GM12878 (cell line): ENCODE measurements at regions of chr11 and their contacts with region 1.

Region 1: DNA sequence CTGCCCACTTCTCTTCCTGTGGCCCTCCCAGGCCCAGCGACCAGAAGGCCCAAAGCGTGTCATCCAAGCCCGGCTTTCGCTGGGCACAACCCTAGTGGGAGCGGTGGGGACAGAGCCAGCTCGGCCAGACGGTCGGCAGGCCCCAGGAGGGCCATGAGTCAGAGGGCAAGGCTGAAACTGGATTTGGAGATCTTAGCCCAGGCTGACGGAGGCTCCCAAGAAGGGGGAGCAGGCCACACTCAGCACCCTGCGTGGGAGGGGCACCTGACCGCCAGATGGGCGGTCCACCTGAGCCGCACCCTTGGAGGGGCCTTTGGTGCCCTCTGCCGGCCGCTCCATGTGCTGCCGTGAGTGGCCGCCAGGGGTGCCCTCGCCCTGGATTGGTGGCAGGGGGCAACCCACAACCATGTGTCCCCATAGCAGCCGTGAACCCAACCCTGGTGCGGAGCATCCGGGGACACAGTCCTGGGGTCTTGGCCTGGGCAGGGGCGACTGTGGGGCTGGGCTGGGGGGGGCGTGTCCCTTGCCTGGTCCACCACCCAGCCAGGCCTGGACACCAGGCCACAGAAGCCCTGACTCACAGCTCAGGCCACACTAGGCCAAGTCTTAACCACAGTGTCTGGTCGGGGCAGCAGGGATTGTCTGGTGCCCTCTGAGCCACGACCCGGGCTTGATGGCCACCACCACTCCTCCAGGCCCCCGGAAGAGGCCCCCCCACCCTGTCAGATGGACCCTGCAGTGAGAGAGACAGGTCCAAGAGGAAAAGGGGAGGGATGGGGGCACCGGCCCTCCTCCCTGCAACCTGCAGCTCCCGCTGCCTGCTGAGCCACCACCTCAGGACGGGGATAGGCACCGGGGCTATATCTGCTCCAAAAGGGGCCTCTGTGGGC is 19.2 kb upstream of the TALDO1 start:
- DNase-seq: no peak
- ATAC-seq: peak; percentile 89
- H3K4me3 ChIP-seq: no peak overlapping the region
- H3K27ac ChIP-seq: no peak overlapping the region
- H3K4me1 ChIP-seq: peaks cover 6% of the 10 kb centered on the region
- H3K27me3 ChIP-seq: no peaks in the 10 kb centered on the region
- CTCF ChIP-seq: peak; percentile 93 to 100 (median 100); a peak in 5 of 6 replicates
- EP300 ChIP-seq: no peak
- POLR2A ChIP-seq: 0 out of 2 replicates have a peak, but pooled peaks have one; percentile 7
- RAD21 ChIP-seq: peak; percentile 70

Region 2: GRCh38 chr11:554824-555472 is 173.2 kb before region 1 on chr11:
- CTCF ChIA-PET with region 1: interaction called, 54 read pairs
- POLR2A ChIA-PET with region 1: interaction called, 6 read pairs
- RAD21 ChIA-PET with region 1: interaction called, 22 read pairs
- SMC1A ChIA-PET with region 1: interaction called, 6 read pairs
- in situ Hi-C with region 1: no loop called
- intact Hi-C with region 1: loop called (anchors 2 kb)
- DNase-seq: no peak
- ATAC-seq: peak; percentile 90
- H3K4me3 ChIP-seq: peak overlapping the region; percentile 53; the same call in 1 of the 2 replicates
- H3K27ac ChIP-seq: no peak overlapping the region
- H3K4me1 ChIP-seq: peaks cover 2% of the 10 kb centered on the region
- H3K27me3 ChIP-seq: peaks cover 0 to 5% of the 10 kb centered on the region in 2 experiments; a peak in 2 of 4 replicates
- CTCF ChIP-seq: peak; percentile 48 to 79 (median 74)
- EP300 ChIP-seq: no peak
- POLR2A ChIP-seq: peak; percentile 26; the same call in 1 of the 2 replicates
- RAD21 ChIP-seq: peak; percentile 77

Region 3: DNA sequence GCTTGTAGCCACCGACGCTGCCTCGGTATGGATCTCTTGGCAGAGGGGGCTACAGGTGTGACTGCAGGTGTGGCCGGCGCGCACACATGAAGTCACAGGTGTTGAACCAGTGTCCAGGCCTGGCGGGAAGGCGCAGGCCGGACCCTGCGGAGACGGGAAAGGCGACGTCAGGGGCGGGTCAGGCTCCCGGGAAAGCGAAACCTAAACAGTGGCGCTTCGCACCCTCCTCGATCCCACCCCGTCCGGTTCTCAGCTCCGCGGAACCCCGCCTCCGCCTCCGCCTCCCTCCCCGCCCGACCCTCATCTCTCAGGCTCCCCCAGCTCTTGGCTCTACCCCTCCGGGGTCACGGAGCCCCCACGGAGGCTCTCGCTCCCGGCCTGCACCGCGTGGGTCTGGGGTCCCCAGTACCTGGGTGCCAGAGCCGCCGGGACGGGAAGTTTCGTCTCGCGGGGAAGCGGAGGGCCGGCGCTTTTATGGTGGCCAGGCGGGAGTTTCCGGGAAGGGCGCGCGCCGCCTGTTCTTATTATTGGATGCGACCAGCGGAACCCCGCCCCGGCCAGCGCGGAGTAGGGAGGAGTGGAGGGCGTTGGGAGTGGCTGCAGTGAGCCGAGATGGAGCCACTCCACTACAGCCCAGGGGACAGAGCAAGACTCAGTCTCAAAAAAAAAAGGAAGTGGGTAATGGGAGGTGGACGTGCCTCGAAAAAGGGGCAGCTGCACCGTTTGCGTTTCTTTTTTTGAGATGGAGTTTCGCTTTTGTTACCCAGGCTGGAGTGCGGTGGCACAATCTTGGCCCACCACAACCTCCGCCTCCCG is 112.4 kb before region 1 on chr11 and contains the start of gene IRF7:
- CTCF ChIA-PET with region 1: no interaction called
- POLR2A ChIA-PET with region 1: interaction called, 4 read pairs
- RAD21 ChIA-PET with region 1: interaction called, 5 read pairs
- SMC1A ChIA-PET with region 1: no interaction called
- in situ Hi-C with region 1: no loop called
- intact Hi-C with region 1: loop called (anchors 5 kb)
- DNase-seq: peak; percentile 89
- ATAC-seq: peak; percentile 92
- H3K4me3 ChIP-seq: peak within 1 kb of the TSS; percentile 90
- H3K27ac ChIP-seq: peak within 1 kb of the TSS; percentile 100
- H3K4me1 ChIP-seq: peaks cover 14% of the 10 kb centered on the region
- H3K27me3 ChIP-seq: no peaks in the 10 kb centered on the region
- CTCF ChIP-seq: no peak
- EP300 ChIP-seq: peak in 1 of 2 experiments; percentile 11; a peak in 1 of 4 replicates
- POLR2A ChIP-seq: peak; percentile 93
- RAD21 ChIP-seq: no peak
- polyA plus RNA-seq, gene IRF7: 4.4 to 26.4 TPM

Region 4: DNA sequence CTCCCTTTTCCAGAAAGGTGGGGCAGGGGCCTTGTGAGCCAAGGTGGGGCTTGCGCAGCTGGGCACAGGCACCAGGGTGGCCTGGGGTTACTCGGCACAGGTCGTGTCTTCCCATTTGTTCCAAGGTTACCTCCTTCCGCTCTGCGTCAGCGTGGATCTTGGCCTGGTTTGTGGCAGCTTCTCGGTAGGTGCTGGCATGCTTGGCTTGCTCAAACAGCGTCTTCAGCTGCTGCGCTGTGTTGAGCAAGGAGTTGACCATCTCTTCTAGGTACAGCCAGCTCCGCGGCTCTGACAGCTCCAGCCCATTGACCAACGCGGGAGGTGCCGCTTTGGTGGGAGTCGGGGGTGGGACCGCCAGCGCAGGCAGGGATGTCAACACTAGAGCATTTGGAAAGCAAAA is 53.7 kb before region 1 on chr11:
- CTCF ChIA-PET with region 1: interaction called, 17 read pairs
- POLR2A ChIA-PET with region 1: interaction called, 5 read pairs
- RAD21 ChIA-PET with region 1: interaction called, 5 read pairs
- SMC1A ChIA-PET with region 1: no interaction called
- in situ Hi-C with region 1: loop called (anchors 10 kb)
- intact Hi-C with region 1: no loop called
- DNase-seq: no peak
- ATAC-seq: no peak
- H3K4me3 ChIP-seq: no peak overlapping the region
- H3K27ac ChIP-seq: no peak overlapping the region
- H3K4me1 ChIP-seq: no peaks in the 10 kb centered on the region
- H3K27me3 ChIP-seq: no peaks in the 10 kb centered on the region
- CTCF ChIP-seq: no peak
- EP300 ChIP-seq: no peak
- POLR2A ChIP-seq: no peak
- RAD21 ChIP-seq: no peak

Region 5: GRCh38 chr11:747158-748006 is 19.3 kb after region 1 on chr11 and contains the start of gene TALDO1:
- CTCF ChIA-PET with region 1: interaction called, 8 read pairs
- POLR2A ChIA-PET with region 1: interaction called, 10 read pairs
- RAD21 ChIA-PET with region 1: no interaction called
- SMC1A ChIA-PET with region 1: no interaction called
- in situ Hi-C with region 1: no loop called
- intact Hi-C with region 1: no loop called
- DNase-seq: peak; percentile 42
- ATAC-seq: peak; percentile 97
- H3K4me3 ChIP-seq: peak within 1 kb of the TSS; percentile 90
- H3K27ac ChIP-seq: peak within 1 kb of the TSS; percentile 81
- H3K4me1 ChIP-seq: peaks cover 4% of the 10 kb centered on the region
- H3K27me3 ChIP-seq: no peaks in the 10 kb centered on the region
- CTCF ChIP-seq: peak in 2 of 3 experiments; percentile 21 to 35; a peak in 2 of 6 replicates
- EP300 ChIP-seq: no peak
- POLR2A ChIP-seq: peak; percentile 86
- RAD21 ChIP-seq: no peak
- polyA plus RNA-seq, gene TALDO1: 121 to 189 TPM

Region 6: GRCh38 chr11:798093-798713 is 70.1 kb after region 1 on chr11 and contains the start of gene SLC25A22:
- CTCF ChIA-PET with region 1: interaction called, 3 read pairs
- POLR2A ChIA-PET with region 1: no interaction called
- RAD21 ChIA-PET with region 1: interaction called, 14 read pairs
- SMC1A ChIA-PET with region 1: no interaction called
- in situ Hi-C with region 1: no loop called
- intact Hi-C with region 1: no loop called
- DNase-seq: no peak
- ATAC-seq: peak; percentile 70
- H3K4me3 ChIP-seq: peak within 1 kb of the TSS; percentile 97
- H3K27ac ChIP-seq: peak within 1 kb of the TSS; percentile 85
- H3K4me1 ChIP-seq: peaks cover 15% of the 10 kb centered on the region
- H3K27me3 ChIP-seq: no peaks in the 10 kb centered on the region
- CTCF ChIP-seq: peak; percentile 63 to 86 (median 67); a peak in 4 of 6 replicates
- EP300 ChIP-seq: no peak
- POLR2A ChIP-seq: peak; percentile 50; the same call in 1 of the 2 replicates
- RAD21 ChIP-seq: peak; percentile 50
- polyA plus RNA-seq, gene SLC25A22: 0.27 to 0.46 TPM

Region 7: GRCh38 chr11:925496-926321 is 197.6 kb after region 1 on chr11 and contains the start of gene AP2A2:
- CTCF ChIA-PET with region 1: no interaction called
- POLR2A ChIA-PET with region 1: no interaction called
- RAD21 ChIA-PET with region 1: no interaction called
- SMC1A ChIA-PET with region 1: no interaction called
- in situ Hi-C with region 1: no loop called
- intact Hi-C with region 1: no loop called
- DNase-seq: no peak
- ATAC-seq: peak; percentile 78
- H3K4me3 ChIP-seq: peak within 1 kb of the TSS; percentile 66
- H3K27ac ChIP-seq: peak within 1 kb of the TSS; percentile 63
- H3K4me1 ChIP-seq: peaks cover 7% of the 10 kb centered on the region; the same call in 1 of the 2 replicates
- H3K27me3 ChIP-seq: no peaks in the 10 kb centered on the region
- CTCF ChIP-seq: peak; percentile 46 to 77 (median 58); a peak in 5 of 6 replicates
- EP300 ChIP-seq: no peak
- POLR2A ChIP-seq: peak; percentile 82
- RAD21 ChIP-seq: peak; percentile 17; the same call in 1 of the 2 replicates
- polyA plus RNA-seq, gene AP2A2: 0.58 to 2.6 TPM

Region 8: DNA sequence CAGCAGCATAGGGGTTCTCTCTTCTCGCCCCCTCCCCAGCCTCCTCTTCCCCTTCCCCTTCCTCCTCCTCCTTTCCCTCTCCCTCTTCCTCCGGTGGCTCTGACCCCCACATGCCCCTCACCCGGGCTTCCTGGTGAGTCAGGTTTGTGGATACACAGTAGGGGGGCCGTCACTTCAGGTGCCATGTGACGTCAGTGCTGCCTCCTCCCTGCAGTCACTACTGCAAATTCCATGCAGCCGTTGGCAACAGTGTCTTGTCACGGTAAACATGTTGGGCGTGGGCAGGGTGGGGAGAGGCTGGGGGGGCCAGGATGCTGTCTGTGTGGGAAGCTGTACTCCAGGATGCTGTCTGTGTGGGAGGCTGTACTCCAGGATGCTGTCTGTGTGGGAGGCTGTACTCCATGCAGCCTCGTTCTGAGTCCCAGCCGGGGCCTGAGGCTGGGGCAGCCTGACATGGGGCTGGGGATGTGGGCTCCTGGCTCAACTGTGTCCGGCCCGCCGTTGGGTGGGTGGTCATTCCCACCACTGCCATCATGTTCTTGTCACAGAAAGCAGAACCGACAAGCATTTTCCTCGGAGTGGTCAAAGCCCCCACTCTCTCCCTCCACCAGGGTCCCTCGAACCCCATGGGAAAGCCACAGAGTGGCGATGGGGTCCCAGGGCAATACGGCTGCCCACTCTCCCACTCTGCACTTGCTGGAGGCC is 344.2 kb after region 1 on chr11:
- CTCF ChIA-PET with region 1: no interaction called
- POLR2A ChIA-PET with region 1: no interaction called
- RAD21 ChIA-PET with region 1: no interaction called
- SMC1A ChIA-PET with region 1: no interaction called
- in situ Hi-C with region 1: no loop called
- intact Hi-C with region 1: no loop called
- DNase-seq: no peak
- ATAC-seq: no peak
- H3K4me3 ChIP-seq: no peak overlapping the region
- H3K27ac ChIP-seq: no peak overlapping the region
- H3K4me1 ChIP-seq: no peaks in the 10 kb centered on the region
- H3K27me3 ChIP-seq: no peaks in the 10 kb centered on the region
- CTCF ChIP-seq: no peak
- EP300 ChIP-seq: no peak
- POLR2A ChIP-seq: no peak
- RAD21 ChIP-seq: no peak